Natural killer cell (primary cell): ENCODE measurements at regions of chr1 and their contacts with region 1.

Region 1: DNA sequence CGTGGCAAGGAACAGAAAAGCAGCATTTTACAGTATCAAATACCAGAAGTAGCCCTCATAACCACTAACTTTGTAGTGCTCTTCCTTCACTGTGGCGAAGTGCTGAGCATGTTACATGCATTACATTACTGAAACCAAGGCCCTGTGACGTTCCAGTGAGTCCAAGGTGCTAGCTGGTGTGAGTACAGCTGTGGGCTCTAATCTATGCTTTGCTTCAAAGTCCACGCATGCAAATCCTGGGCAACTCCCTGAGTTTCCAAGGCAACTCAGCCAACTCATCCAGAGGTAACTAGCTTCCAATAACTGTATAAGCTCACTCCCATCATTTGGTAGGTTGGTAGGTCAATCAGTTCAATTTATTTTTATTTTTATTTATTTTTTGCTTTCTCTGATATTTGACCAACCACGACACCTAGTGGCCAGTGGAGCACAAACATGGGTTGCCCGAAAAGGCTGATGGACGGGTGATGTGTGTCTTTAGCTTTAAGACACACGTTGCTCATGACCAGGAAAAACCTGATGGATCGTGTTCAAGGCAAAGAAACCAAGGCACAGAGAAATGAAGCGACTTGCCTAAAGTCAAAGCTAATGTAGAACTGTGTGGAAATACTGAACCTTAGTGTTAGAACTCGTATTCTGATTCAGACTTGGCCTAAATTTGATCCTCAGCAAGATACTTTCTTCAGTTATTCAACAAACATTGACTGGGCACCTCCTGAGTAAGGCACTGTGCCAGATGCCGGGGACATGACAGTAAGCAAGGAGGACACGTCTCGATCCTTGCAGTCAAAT is 73.0 kb downstream of the GNG12 start:
- DNase-seq: peak in 1 of 2 donors; percentile 79
- ATAC-seq: peak; percentile 60 to 68 (median 63)
- H3K4me3 ChIP-seq: no peak overlapping the region
- H3K4me3 Mint-ChIP-seq: no peak overlapping the region
- H3K27ac ChIP-seq: no peak overlapping the region
- H3K27ac Mint-ChIP-seq: no peak overlapping the region
- H3K4me1 ChIP-seq: no peaks in the 10 kb centered on the region
- H3K4me1 Mint-ChIP-seq: no peaks in the 10 kb centered on the region
- H3K27me3 ChIP-seq: no peaks in the 10 kb centered on the region
- H3K27me3 Mint-ChIP-seq: peaks cover 15 to 34% of the 10 kb centered on the region in 2 donors
- CTCF ChIP-seq: peak; percentile 93

Region 2: DNA sequence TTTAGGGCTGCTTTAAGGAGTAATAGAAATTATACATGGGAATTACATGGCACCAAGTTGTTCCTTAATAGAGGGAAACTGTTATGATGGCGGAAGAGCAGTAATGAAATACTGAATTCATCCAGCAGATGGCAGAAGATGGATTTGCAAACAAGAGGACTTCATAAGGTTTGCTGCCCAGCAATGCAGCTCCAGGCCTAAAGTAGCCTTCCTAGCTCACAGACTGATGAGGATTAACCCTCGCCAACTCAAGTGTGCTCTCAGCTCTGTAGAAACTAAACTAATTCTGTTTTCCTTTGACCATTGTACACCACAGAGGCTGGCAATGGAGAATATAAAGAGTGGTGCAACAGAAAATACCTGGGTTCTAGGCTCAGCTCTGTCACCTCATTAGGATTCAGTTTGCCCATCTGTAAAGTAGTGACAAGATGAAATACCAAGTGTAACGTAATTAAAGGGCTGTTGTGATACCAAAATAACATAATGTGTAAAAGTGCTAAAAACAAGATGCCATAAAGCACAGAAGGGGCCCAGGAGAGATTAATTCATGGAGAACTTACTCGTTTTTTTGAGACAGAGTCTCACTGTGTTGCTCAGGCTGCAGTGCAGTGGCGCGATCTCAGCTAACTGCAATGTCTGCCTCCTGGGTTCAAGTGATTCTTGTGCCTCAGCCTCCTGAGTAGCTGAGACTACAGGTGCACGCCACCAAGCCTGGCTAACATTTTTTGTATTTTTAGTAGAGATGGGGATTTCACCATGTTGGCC is 227.6 kb before region 1 on chr1:
- intact Hi-C with region 1: loop called (anchors 1 kb)
- DNase-seq: peak in 1 of 2 donors; percentile 60
- ATAC-seq: peak in 1 of 3 donors; percentile 38
- H3K4me3 ChIP-seq: no peak overlapping the region
- H3K4me3 Mint-ChIP-seq: no peak overlapping the region
- H3K27ac ChIP-seq: no peak overlapping the region
- H3K27ac Mint-ChIP-seq: no peak overlapping the region
- H3K4me1 ChIP-seq: no peaks in the 10 kb centered on the region
- H3K4me1 Mint-ChIP-seq: peaks cover 0 to 16% of the 10 kb centered on the region in 2 donors
- H3K27me3 ChIP-seq: no peaks in the 10 kb centered on the region
- H3K27me3 Mint-ChIP-seq: peaks cover 0 to 3% of the 10 kb centered on the region in 2 donors
- CTCF ChIP-seq: peak; percentile 72

Region 3: DNA sequence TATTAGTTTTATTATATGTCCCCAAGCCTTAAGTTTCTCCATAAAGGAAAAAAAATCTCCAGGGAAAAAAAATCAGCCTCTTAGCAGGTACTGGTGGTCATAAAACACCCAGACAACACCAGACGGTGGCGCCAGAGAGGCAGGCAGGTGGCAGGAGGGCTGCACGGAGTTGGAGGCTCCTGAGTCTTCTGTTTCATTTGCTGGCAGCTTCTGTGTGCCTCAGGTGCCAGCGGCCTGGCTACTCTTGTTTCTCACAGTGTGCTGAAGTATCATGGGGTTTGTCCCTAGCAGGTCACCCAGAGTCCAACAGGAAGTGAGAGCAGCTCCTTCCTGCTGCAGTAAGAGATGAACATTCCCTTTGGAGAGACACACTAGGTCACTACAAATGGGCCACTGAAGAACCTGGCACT is 198.5 kb before region 1 on chr1:
- intact Hi-C with region 1: loop called (anchors 1 kb)
- DNase-seq: peak; percentile 69 to 84
- ATAC-seq: peak; percentile 73 to 92 (median 79)
- H3K4me3 ChIP-seq: no peak overlapping the region
- H3K4me3 Mint-ChIP-seq: no peak overlapping the region
- H3K27ac ChIP-seq: no peak overlapping the region
- H3K27ac Mint-ChIP-seq: no peak overlapping the region
- H3K4me1 ChIP-seq: no peaks in the 10 kb centered on the region
- H3K4me1 Mint-ChIP-seq: no peaks in the 10 kb centered on the region
- H3K27me3 ChIP-seq: no peaks in the 10 kb centered on the region
- H3K27me3 Mint-ChIP-seq: peaks cover 0 to 3% of the 10 kb centered on the region in 2 donors
- CTCF ChIP-seq: peak; percentile 79

Region 4: DNA sequence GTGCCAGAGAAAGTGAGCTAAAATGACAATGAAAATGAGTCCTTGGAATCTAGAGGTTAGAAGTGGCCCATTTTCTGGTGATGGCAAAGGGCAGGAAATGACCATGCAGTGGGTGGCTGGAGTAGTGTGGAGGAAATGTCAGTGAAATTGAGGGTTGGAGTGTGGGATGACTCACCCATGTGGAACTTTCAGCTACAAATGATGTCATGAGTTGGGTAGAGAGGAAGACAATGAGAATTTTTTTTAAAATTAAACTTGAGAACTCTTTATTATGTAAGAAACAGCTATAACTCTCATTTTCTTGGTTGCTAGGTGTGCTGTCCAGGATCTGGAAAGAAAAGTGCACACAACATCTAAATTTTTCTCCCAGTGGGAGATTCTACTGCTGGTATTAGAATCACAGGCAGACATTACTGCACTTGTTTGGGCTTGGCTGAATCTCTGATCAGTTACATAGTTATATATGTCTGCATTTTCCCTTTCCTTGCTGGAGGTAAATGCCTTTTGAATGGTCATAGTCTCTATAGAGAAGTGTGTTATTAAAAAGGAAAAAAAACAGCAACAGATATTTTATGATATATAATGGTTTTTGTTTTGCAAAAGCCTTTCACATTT is 129.8 kb after region 1 on chr1:
- intact Hi-C with region 1: no loop called
- DNase-seq: no peak
- ATAC-seq: no peak
- H3K4me3 ChIP-seq: no peak overlapping the region
- H3K4me3 Mint-ChIP-seq: no peak overlapping the region
- H3K27ac ChIP-seq: no peak overlapping the region
- H3K27ac Mint-ChIP-seq: no peak overlapping the region
- H3K4me1 ChIP-seq: no peaks in the 10 kb centered on the region
- H3K4me1 Mint-ChIP-seq: peaks cover 0 to 5% of the 10 kb centered on the region in 2 donors
- H3K27me3 ChIP-seq: no peaks in the 10 kb centered on the region
- H3K27me3 Mint-ChIP-seq: peaks cover 8 to 13% of the 10 kb centered on the region in 2 donors
- CTCF ChIP-seq: no peak